ENCODE measurements at regions of chr1 and their contacts with region 1.

Region 1: DNA sequence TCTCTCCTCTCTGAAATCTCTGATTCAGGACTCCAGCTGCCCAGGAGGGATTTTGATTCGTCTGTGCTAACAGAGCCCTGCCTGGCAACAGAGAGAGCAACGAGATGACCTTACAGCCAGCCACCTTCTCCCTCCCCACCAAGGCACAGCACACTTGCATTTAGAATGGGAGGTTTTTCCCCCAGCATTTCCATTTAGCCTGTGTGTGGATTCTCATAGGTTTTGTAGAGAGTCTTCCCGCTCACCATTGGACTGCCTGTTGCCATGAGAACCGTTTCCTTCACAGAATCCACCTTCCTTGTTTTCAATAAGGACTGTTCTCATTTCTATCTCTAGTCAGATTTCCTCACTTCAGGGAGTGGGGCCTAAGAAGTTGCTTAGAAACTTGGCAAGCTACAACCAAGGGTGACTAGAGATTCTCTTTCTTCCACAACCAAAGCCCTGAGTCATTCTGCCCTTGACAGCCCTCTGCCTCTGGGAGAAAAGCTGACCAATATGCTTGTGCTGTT is 5.8 kb upstream of the IKBKE start:
- DNase-seq: peak in 1 of 5 donors; percentile 27
- ATAC-seq: peak in 2 of 4 donors; percentile 49 to 54
- H3K4me3 ChIP-seq: no peak overlapping the region
- H3K27ac ChIP-seq: peak overlapping the region in 1 of 12 donors; percentile 28
- H3K4me1 ChIP-seq: peaks cover 0 to 63% (median 15%) of the 10 kb centered on the region in 12 donors
- H3K27me3 ChIP-seq: peaks cover 0 to 6% (median 0%) of the 10 kb centered on the region in 9 donors
- CTCF ChIP-seq: no peak
- POLR2A ChIP-seq: no peak

Region 2: GRCh38 chr1:206489980-206490770 is 25.7 kb after region 1 on chr1:
- intact Hi-C with region 1: loop called in 1 of 10 experiments (anchors 2 kb)
- DNase-seq: peak; percentile 68 to 84 (median 78)
- ATAC-seq: peak; percentile 56 to 90 (median 86)
- H3K4me3 ChIP-seq: no peak overlapping the region
- H3K27ac ChIP-seq: no peak overlapping the region
- H3K4me1 ChIP-seq: peaks cover 0 to 36% (median 11%) of the 10 kb centered on the region in 12 donors
- H3K27me3 ChIP-seq: no peaks in the 10 kb centered on the region
- CTCF ChIP-seq: peak; percentile 88 to 98 (median 94)
- POLR2A ChIP-seq: no peak